GM12878 (cell line): ENCODE measurements at regions of chr7 and their contacts with region 1.

Region 1: DNA sequence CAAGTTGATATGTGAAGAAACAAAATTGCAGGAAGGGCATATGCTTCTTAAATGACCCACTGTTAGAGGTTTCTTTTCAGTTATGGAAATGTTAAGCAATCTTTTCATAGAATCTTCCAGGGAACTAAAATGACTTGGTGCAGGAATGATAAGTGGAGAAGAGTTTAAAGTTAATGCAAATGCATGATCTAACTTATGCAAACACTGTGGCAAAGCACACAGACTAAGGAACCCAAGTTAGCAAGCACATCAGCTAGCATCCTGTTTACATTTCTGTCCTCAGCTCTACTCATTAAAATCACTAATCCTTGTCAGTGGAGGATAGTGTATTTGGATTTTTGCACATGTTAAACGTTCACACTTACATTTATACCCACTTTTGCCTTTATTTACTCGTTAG is 9.3 kb downstream of the CLCN1 start:
- DNase-seq: no peak
- ATAC-seq: peak; percentile 35; the same call in 1 of the 3 replicates
- H3K4me3 ChIP-seq: no peak overlapping the region
- H3K27ac ChIP-seq: no peak overlapping the region
- H3K4me1 ChIP-seq: peaks cover 10% of the 10 kb centered on the region; the same call in 1 of the 2 replicates
- H3K27me3 ChIP-seq: no peaks in the 10 kb centered on the region
- CTCF ChIP-seq: no peak
- EP300 ChIP-seq: no peak
- POLR2A ChIP-seq: no peak
- RAD21 ChIP-seq: no peak

Region 2: DNA sequence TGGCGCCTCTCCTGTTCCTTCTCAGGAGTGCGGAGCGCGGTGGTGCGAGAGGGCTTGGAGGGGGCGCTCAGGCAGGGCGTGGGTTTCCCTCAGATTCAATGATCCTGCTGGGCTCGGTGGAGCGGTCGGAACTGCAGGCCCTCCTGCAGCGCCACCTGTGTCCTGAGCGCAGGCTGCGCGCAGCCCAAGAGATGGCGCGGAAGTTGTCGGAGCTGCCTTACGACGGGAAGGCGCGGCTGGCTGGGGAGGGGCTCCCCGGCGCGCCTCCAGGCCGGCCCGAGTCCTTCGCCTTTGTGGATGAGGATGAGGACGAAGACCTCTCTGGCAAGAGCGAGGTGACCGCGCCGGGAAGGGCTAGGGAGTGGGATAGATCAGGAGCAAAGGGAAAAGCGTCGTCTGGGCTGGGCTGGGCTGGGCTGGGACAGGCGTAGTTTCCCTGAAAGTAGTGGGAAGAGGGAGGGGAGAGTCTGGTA is 20.2 kb after region 1 on chr7:
- CTCF ChIA-PET with region 1: no interaction called
- POLR2A ChIA-PET with region 1: no interaction called
- RAD21 ChIA-PET with region 1: no interaction called
- SMC1A ChIA-PET with region 1: no interaction called
- in situ Hi-C with region 1: no loop called
- intact Hi-C with region 1: no loop called
- DNase-seq: no peak
- ATAC-seq: peak; percentile 80
- H3K4me3 ChIP-seq: no peak overlapping the region
- H3K27ac ChIP-seq: no peak overlapping the region
- H3K4me1 ChIP-seq: no peaks in the 10 kb centered on the region
- H3K27me3 ChIP-seq: peaks cover 2 to 10% of the 10 kb centered on the region in 2 experiments; a peak in 3 of 4 replicates
- CTCF ChIP-seq: peak; percentile 34 to 40 (median 37); a peak in 5 of 6 replicates
- EP300 ChIP-seq: no peak
- POLR2A ChIP-seq: no peak
- RAD21 ChIP-seq: peak; percentile 17; the same call in 1 of the 2 replicates

Region 3: GRCh38 chr7:143367972-143368371 is 42.7 kb after region 1 on chr7:
- CTCF ChIA-PET with region 1: no interaction called
- POLR2A ChIA-PET with region 1: no interaction called
- RAD21 ChIA-PET with region 1: no interaction called
- SMC1A ChIA-PET with region 1: no interaction called
- in situ Hi-C with region 1: no loop called
- intact Hi-C with region 1: loop called (anchors 5 kb)
- DNase-seq: no peak
- ATAC-seq: no peak
- H3K4me3 ChIP-seq: no peak overlapping the region
- H3K27ac ChIP-seq: no peak overlapping the region
- H3K4me1 ChIP-seq: no peaks in the 10 kb centered on the region
- H3K27me3 ChIP-seq: peaks cover 7 to 10% of the 10 kb centered on the region in 2 experiments
- CTCF ChIP-seq: no peak
- EP300 ChIP-seq: no peak
- POLR2A ChIP-seq: no peak
- RAD21 ChIP-seq: no peak